ENCODE measurements at regions of chr6 and their contacts with region 1.

Region 1: GRCh38 chr6:42217519-42218367 is at the start of gene MRPS10:
- DNase-seq: peak; percentile 97
- H3K4me3 Mint-ChIP-seq: peak within 1 kb of the TSS; percentile 98
- H3K27ac Mint-ChIP-seq: peak within 1 kb of the TSS; percentile 93
- H3K4me1 Mint-ChIP-seq: peaks cover 21% of the 10 kb centered on the region
- H3K27me3 Mint-ChIP-seq: no peaks in the 10 kb centered on the region
- total RNA-seq, gene MRPS10: 49.4 and 50.8 TPM in 2 replicates

Region 2: DNA sequence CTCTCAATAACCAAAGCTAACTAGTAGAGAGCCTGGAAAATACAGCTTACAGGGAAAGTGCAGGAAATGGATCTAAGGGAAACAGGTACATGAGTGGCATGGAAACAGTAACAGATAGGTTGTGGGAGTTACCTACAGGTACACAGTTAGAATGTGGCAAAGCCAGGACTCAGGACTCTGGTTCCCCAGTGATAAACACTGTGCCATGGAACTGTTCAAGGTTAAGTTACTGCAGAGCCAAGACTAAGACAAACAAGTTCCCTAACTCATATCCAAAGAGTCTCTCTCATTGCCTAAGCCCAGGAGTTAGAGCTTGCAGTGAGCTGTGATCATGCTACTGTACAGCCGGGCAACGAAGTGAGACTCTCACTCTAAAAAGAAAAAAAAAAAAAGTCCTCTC is 303.4 kb before region 1 on chr6:
- intact Hi-C with region 1: no loop called
- DNase-seq: no peak
- H3K4me3 Mint-ChIP-seq: no peak overlapping the region
- H3K27ac Mint-ChIP-seq: no peak overlapping the region
- H3K4me1 Mint-ChIP-seq: peaks cover 26% of the 10 kb centered on the region
- H3K27me3 Mint-ChIP-seq: no peaks in the 10 kb centered on the region

Region 3: GRCh38 chr6:41936073-41936837 is 281.5 kb before region 1 on chr6:
- intact Hi-C with region 1: loop called (anchors 5 kb)
- DNase-seq: peak; percentile 96
- H3K4me3 Mint-ChIP-seq: peak overlapping the region; percentile 100
- H3K27ac Mint-ChIP-seq: peak overlapping the region; percentile 87
- H3K4me1 Mint-ChIP-seq: peaks cover 68% of the 10 kb centered on the region
- H3K27me3 Mint-ChIP-seq: no peaks in the 10 kb centered on the region

Region 4: GRCh38 chr6:42050266-42051032 is 167.3 kb before region 1 on chr6 and contains the start of gene TAF8:
- intact Hi-C with region 1: loop called (anchors 1 kb)
- DNase-seq: peak; percentile 97
- H3K4me3 Mint-ChIP-seq: peak within 1 kb of the TSS; percentile 98
- H3K27ac Mint-ChIP-seq: peak within 1 kb of the TSS; percentile 99
- H3K4me1 Mint-ChIP-seq: peaks cover 65% of the 10 kb centered on the region
- H3K27me3 Mint-ChIP-seq: no peaks in the 10 kb centered on the region
- total RNA-seq, gene TAF8: 38.1 and 38.7 TPM in 2 replicates

Region 5: DNA sequence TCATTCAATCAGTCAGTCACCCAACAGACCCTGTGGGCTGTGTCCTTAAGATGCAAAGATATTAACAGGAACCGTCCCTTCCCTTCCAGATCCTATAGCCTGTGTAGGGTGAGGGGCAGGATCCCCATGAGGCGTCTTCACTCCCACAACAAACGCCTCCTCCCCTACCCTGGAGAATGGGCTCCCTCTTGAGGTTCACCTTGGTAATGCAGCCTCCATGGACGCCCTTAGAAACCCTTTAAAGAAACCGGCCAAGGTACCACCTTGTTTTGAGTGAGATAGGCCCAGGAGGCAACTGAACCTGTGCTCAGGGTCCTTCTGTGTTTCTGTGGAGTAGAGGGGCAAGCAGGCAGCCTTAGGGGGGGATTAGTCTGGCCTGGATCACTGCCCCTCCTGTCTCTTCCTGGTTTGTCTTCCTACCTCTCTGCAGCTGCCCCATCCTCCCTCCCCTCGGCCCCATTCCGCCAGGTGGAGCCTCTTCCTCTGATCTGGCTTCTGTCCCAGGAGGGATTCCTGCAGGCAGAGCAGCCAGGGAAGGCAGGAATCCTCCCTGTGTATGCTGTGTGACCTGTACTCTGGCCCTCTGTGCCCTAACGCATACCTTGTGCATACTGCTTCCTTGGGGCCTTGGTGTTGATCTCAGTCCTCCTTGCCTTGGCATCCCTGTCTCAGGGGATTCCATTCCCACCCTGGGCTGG is 51.1 kb before region 1 on chr6:
- intact Hi-C with region 1: loop called (anchors 1 kb)
- DNase-seq: peak; percentile 95
- H3K4me3 Mint-ChIP-seq: no peak overlapping the region
- H3K27ac Mint-ChIP-seq: no peak overlapping the region
- H3K4me1 Mint-ChIP-seq: peaks cover 7% of the 10 kb centered on the region
- H3K27me3 Mint-ChIP-seq: peaks cover 7% of the 10 kb centered on the region

Region 6: GRCh38 chr6:42352856-42353564 is 135.3 kb after region 1 on chr6:
- intact Hi-C with region 1: no loop called
- DNase-seq: no peak
- H3K4me3 Mint-ChIP-seq: no peak overlapping the region
- H3K27ac Mint-ChIP-seq: no peak overlapping the region
- H3K4me1 Mint-ChIP-seq: peaks cover 15% of the 10 kb centered on the region
- H3K27me3 Mint-ChIP-seq: no peaks in the 10 kb centered on the region

Region 7: GRCh38 chr6:42547407-42548329 is 329.9 kb after region 1 on chr6:
- intact Hi-C with region 1: loop called (anchors 2 kb)
- DNase-seq: peak; percentile 96
- H3K4me3 Mint-ChIP-seq: peak overlapping the region; percentile 74
- H3K27ac Mint-ChIP-seq: peak overlapping the region; percentile 70
- H3K4me1 Mint-ChIP-seq: peaks cover 14% of the 10 kb centered on the region
- H3K27me3 Mint-ChIP-seq: peaks cover 11% of the 10 kb centered on the region

Region 8: DNA sequence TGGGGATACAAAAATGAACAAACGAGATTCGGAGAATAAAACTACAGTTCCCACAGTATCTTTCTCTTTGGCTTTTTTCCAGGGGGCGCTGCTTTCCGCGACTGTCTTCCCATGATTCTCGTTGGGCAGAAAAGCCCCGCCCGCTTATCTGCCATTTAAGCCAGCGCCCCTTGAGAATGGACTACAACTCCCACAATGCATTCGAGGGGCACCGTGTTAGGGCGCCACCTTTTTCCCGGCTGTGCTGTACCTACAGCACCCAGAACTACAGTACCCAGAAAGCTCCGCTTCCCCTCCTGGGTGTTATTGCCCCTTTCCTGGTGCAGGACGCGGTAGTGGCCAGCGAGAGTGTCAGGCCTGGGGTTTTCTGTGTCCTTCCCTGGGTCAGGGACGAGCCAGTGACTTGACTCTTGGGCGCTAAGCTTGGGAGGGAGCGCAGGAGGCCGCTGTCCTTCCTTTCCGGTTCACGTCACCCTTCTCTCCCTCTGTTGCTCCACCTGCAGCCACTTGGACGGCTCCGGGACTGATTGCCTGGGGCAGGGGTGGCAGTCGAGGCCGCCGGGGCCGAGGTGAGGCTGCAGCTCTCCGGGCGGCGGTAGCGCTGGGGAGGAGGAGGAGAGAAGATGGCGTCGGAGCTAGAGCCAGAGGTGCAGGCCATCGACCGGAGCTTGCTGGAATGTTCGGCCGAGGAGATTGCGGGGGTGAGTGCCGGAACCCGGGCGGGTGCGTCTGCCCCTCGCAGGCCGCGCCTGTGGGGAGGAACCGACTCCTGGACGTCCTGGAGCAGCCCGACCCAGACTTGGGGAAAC is 346.2 kb after region 1 on chr6 and contains the start of gene UBR2:
- intact Hi-C with region 1: loop called (anchors 2 kb)
- DNase-seq: peak; percentile 98
- H3K4me3 Mint-ChIP-seq: peak within 1 kb of the TSS; percentile 99
- H3K27ac Mint-ChIP-seq: peak within 1 kb of the TSS; percentile 93
- H3K4me1 Mint-ChIP-seq: peaks cover 25% of the 10 kb centered on the region
- H3K27me3 Mint-ChIP-seq: peaks cover 2% of the 10 kb centered on the region
- total RNA-seq, gene UBR2: 30.1 and 30.8 TPM in 2 replicates

Measured in activated CD4-positive, alpha-beta T cell treated with anti-CD3 and anti-CD28 coated beads, Interleukin-2, amount 10 ng/mL, durations not matched to agents 24 days and 14 days (primary cell).